Activated CD4-positive, alpha-beta T cell treated with anti-CD3 and anti-CD28 coated beads for 36 hours (primary cell): ENCODE measurements at regions of chr11 and their contacts with region 1.

Region 1: DNA sequence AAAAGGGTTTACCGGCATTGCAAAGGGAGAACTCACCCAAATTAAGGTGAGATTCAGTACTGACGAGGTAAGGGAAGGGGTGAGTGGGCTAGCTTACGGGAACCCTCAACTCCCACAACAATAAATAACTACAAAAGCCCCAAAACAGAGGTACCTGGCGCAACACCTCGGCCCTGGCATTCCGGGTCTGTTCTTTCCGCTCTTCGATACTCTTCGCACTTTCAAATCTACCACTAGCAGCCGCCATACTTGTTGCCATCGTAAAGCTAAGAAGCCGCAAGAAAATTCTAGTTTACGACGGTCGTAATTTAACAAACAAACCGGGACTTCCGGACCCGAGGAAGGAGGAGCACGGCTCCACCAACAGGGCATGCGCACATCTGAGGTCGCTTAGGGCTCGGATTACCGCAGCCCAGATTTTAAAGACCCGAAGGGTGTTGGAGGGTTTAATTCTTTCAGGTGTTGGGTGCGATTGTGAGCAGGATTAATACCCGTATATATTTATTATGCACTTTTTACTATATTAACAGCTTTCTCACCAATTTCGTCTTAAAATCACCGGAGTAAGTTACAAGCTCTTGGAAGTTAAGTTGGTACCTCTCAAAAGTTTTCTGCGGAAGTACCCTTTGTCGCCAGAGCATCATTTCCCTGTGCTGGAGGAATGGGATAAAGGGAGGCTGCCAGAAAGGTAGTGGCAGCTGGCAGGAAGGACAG is at the start of gene CWF19L2:
- DNase-seq: peak; percentile 94
- ATAC-seq: peak; percentile 99
- H3K4me3 Mint-ChIP-seq: peak within 1 kb of the TSS; percentile 84
- H3K27ac Mint-ChIP-seq: peak within 1 kb of the TSS; percentile 95
- H3K4me1 Mint-ChIP-seq: peaks cover 21% of the 10 kb centered on the region
- H3K27me3 Mint-ChIP-seq: no peaks in the 10 kb centered on the region
- total RNA-seq, gene CWF19L2: 14.1 to 14.3 TPM

Region 2: GRCh38 chr11:106021967-106022794 is 1435.5 kb before region 1 on chr11 and contains the start of gene MSANTD4:
- CTCF ChIA-PET with region 1: no interaction called
- POLR2A ChIA-PET with region 1: no interaction called
- intact Hi-C with region 1: loop called in 1 of 2 experiments (anchors 2 kb)
- DNase-seq: peak; percentile 98
- ATAC-seq: peak; percentile 98
- H3K4me3 Mint-ChIP-seq: peak within 1 kb of the TSS; percentile 91
- H3K27ac Mint-ChIP-seq: peak within 1 kb of the TSS; percentile 88
- H3K4me1 Mint-ChIP-seq: peaks cover 35% of the 10 kb centered on the region
- H3K27me3 Mint-ChIP-seq: peaks cover 2% of the 10 kb centered on the region
- total RNA-seq, gene MSANTD4: 12.4 to 13.1 TPM

Region 3: DNA sequence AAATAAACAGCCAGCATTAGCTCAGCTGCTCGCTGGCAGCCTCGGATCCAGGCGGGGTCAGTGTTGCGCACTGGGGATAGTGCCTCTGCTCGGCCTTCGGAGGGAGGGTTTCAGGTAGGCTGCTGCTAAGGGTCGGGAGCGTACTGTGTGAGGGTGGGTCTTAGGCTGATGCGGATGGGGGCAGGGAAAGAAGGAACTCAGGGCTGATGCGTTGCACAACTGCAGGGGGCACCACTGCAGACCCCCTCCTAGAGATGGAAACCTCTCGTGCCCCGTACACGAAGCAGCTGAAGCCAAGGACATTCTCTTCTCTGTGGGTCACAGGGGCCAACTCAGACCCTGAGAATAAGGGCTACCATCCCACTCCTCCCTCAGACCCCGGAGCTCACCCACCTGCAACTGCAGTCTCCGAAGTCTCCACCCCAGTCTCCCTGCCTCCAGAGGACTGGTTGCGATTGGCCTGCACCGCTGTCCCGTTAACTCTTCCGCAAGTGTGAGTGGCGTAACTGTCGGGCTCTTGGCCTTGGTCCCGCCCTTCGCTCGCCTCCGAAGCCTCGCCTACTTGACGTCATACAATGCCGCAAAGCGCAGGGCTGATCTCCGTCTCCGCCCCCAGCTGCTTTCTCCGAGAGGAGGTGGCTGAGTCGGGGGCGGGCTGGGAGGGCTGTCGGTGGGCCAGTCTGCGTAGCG is 1380.7 kb before region 1 on chr11 and contains the start of gene KBTBD3:
- CTCF ChIA-PET with region 1: no interaction called
- POLR2A ChIA-PET with region 1: no interaction called
- intact Hi-C with region 1: loop called in 1 of 2 experiments (anchors 1 kb)
- DNase-seq: peak; percentile 99
- ATAC-seq: peak; percentile 97
- H3K4me3 Mint-ChIP-seq: peak within 1 kb of the TSS; percentile 87
- H3K27ac Mint-ChIP-seq: peak within 1 kb of the TSS; percentile 91
- H3K4me1 Mint-ChIP-seq: peaks cover 45% of the 10 kb centered on the region
- H3K27me3 Mint-ChIP-seq: no peaks in the 10 kb centered on the region
- total RNA-seq, gene KBTBD3: 8.9 to 9.1 TPM

Region 4: GRCh38 chr11:107468596-107468995 is 10.9 kb after region 1 on chr11:
- CTCF ChIA-PET with region 1: no interaction called
- POLR2A ChIA-PET with region 1: no interaction called
- intact Hi-C with region 1: no loop called
- DNase-seq: no peak
- ATAC-seq: no peak
- H3K4me3 Mint-ChIP-seq: no peak overlapping the region
- H3K27ac Mint-ChIP-seq: no peak overlapping the region
- H3K4me1 Mint-ChIP-seq: no peaks in the 10 kb centered on the region
- H3K27me3 Mint-ChIP-seq: peaks cover 29% of the 10 kb centered on the region

Region 5: DNA sequence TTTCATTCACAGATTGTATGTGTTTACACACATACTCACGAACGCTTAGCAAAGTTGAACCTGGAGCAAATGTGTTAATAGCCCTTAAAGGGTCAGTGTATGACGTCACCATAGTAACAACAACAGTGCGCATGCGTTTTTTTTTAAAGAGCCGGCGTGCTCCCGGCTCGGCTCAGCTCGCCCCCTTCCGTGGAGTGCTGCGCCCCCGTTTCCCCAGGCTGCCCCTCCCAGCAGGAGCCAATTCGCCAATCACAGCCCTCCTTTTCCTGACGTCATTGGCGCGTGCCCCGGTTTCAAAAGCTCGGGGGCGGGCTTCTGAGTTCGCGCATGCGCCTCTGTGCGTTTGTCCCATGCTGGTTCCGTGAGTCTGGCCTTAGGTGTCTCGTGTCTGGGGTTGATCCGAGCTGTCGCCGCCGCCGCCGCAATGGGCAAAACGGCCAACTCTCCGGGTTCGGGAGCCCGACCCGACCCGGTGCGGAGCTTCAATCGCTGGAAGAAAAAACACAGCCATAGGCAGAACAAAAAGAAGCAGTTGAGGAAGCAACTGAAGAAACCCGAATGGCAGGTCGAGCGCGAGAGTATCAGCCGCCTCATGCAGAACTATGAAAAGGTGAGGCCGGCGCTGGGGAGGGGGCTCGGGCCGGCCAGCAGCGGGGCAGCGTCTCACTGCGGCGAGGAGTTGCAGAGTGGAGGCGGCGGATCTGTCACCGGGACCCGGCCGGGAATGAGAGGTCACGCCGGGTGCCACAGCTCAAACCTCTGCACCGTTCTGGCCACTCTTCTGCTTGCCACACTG is 1207.2 kb after region 1 on chr11 and contains the start of gene DDX10:
- CTCF ChIA-PET with region 1: no interaction called
- POLR2A ChIA-PET with region 1: no interaction called
- intact Hi-C with region 1: loop called (anchors 5 to 10 kb)
- DNase-seq: peak; percentile 99
- ATAC-seq: peak; percentile 99
- H3K4me3 Mint-ChIP-seq: peak within 1 kb of the TSS; percentile 99
- H3K27ac Mint-ChIP-seq: peak within 1 kb of the TSS; percentile 91
- H3K4me1 Mint-ChIP-seq: peaks cover 37% of the 10 kb centered on the region
- H3K27me3 Mint-ChIP-seq: no peaks in the 10 kb centered on the region
- total RNA-seq, gene DDX10: 45.8 to 50.9 TPM